CD8-positive, alpha-beta T cell (primary cell): ENCODE measurements at regions of chr6 and their contacts with region 1.

Region 1: GRCh38 chr6:27893059-27893835 is 18.9 kb downstream of the OR2B2 start:
- DNase-seq: peak; percentile 79 to 96 (median 85)
- ATAC-seq: peak; percentile 72
- H3K4me3 ChIP-seq: peak overlapping the region; percentile 66 to 81
- H3K4me3 Mint-ChIP-seq: no peak overlapping the region
- H3K27ac ChIP-seq: peak overlapping the region; percentile 70 to 88
- H3K27ac Mint-ChIP-seq: no peak overlapping the region
- H3K4me1 ChIP-seq: peaks cover 18% of the 10 kb centered on the region
- H3K4me1 Mint-ChIP-seq: peaks cover 29% of the 10 kb centered on the region
- H3K27me3 ChIP-seq: no peaks in the 10 kb centered on the region
- H3K27me3 Mint-ChIP-seq: no peaks in the 10 kb centered on the region
- CTCF ChIP-seq: no peak

Region 2: GRCh38 chr6:26025894-26026832 is 1867.1 kb before region 1 on chr6:
- CTCF ChIA-PET with region 1: no interaction called
- POLR2A ChIA-PET with region 1: interaction called, 16 read pairs
- intact Hi-C with region 1: loop called (anchors 5 kb)
- DNase-seq: peak; percentile 74 to 99 (median 89)
- ATAC-seq: peak; percentile 43
- H3K4me3 ChIP-seq: peak overlapping the region; percentile 50 to 76
- H3K4me3 Mint-ChIP-seq: peak overlapping the region; percentile 86
- H3K27ac ChIP-seq: peak overlapping the region; percentile 93 to 96
- H3K27ac Mint-ChIP-seq: peak overlapping the region; percentile 98
- H3K4me1 ChIP-seq: peaks cover 25% of the 10 kb centered on the region
- H3K4me1 Mint-ChIP-seq: peaks cover 48% of the 10 kb centered on the region
- H3K27me3 ChIP-seq: no peaks in the 10 kb centered on the region
- H3K27me3 Mint-ChIP-seq: no peaks in the 10 kb centered on the region
- CTCF ChIP-seq: peak; percentile 80

Region 3: GRCh38 chr6:26071135-26071534 is 1822.1 kb before region 1 on chr6:
- CTCF ChIA-PET with region 1: no interaction called
- POLR2A ChIA-PET with region 1: no interaction called
- intact Hi-C with region 1: no loop called
- DNase-seq: no peak
- ATAC-seq: no peak
- H3K4me3 ChIP-seq: no peak overlapping the region
- H3K4me3 Mint-ChIP-seq: no peak overlapping the region
- H3K27ac ChIP-seq: no peak overlapping the region
- H3K27ac Mint-ChIP-seq: no peak overlapping the region
- H3K4me1 ChIP-seq: peaks cover under 1% of the 10 kb centered on the region
- H3K4me1 Mint-ChIP-seq: no peaks in the 10 kb centered on the region
- H3K27me3 ChIP-seq: no peaks in the 10 kb centered on the region
- H3K27me3 Mint-ChIP-seq: peaks cover 2% of the 10 kb centered on the region
- CTCF ChIP-seq: no peak

Region 4: GRCh38 chr6:26234421-26235296 is 1658.6 kb before region 1 on chr6:
- CTCF ChIA-PET with region 1: no interaction called
- POLR2A ChIA-PET with region 1: interaction called, 19 read pairs
- intact Hi-C with region 1: no loop called
- DNase-seq: peak; percentile 55 to 88 (median 66)
- ATAC-seq: peak; percentile 63
- H3K4me3 ChIP-seq: peak overlapping the region; percentile 66 to 76
- H3K4me3 Mint-ChIP-seq: peak overlapping the region; percentile 85
- H3K27ac ChIP-seq: peak overlapping the region; percentile 84 to 92
- H3K27ac Mint-ChIP-seq: peak overlapping the region; percentile 93
- H3K4me1 ChIP-seq: peaks cover 14% of the 10 kb centered on the region
- H3K4me1 Mint-ChIP-seq: peaks cover 31% of the 10 kb centered on the region
- H3K27me3 ChIP-seq: no peaks in the 10 kb centered on the region
- H3K27me3 Mint-ChIP-seq: no peaks in the 10 kb centered on the region
- CTCF ChIP-seq: no peak

Region 5: GRCh38 chr6:27132532-27133280 is 760.5 kb before region 1 on chr6:
- CTCF ChIA-PET with region 1: interaction called, 3 read pairs
- POLR2A ChIA-PET with region 1: interaction called, 65 read pairs
- intact Hi-C with region 1: loop called (anchors 1 kb)
- DNase-seq: peak; percentile 80 to 99 (median 87)
- ATAC-seq: peak; percentile 82
- H3K4me3 ChIP-seq: peak overlapping the region; percentile 76 to 83
- H3K4me3 Mint-ChIP-seq: no peak overlapping the region
- H3K27ac ChIP-seq: peak overlapping the region; percentile 86 to 92
- H3K27ac Mint-ChIP-seq: no peak overlapping the region
- H3K4me1 ChIP-seq: peaks cover 15% of the 10 kb centered on the region
- H3K4me1 Mint-ChIP-seq: peaks cover 21% of the 10 kb centered on the region
- H3K27me3 ChIP-seq: no peaks in the 10 kb centered on the region
- H3K27me3 Mint-ChIP-seq: no peaks in the 10 kb centered on the region
- CTCF ChIP-seq: no peak

Region 6: DNA sequence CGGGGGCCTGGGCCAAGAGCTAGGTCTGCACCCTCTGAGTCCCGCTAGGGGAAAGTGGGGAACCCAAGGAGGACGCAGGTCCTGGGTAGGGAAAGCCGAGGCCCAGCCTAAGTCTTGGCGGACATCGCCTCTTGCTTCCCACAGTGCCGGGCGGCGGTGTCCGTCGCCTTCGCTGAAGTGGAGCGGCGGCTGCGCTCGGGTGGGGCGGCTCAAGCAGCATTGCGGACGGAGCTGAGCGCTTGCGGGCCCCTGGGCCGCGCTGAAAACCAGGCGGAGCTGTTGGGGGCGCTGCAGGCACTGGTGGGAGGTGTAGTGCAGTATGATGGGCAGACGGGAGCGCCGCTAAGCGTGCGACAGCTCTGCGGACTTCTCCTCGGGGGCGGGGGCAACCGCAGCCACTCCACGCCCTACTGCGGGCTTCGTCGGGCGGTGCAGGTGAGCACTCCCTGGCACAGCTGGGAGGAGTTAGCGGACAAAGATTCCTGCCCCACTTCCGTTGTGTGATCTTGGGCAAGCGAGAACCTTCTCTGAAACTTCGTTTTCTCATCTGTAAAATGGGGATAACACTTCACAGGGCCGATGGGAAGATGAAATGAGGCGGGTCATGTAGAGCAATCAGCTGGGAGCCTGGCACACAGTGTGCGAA is 641.5 kb before region 1 on chr6:
- CTCF ChIA-PET with region 1: no interaction called
- POLR2A ChIA-PET with region 1: interaction called, 4 read pairs
- intact Hi-C with region 1: loop called in 1 of 2 experiments (anchors 5 kb)
- DNase-seq: peak; percentile 18 to 87 (median 63)
- ATAC-seq: peak; percentile 91
- H3K4me3 ChIP-seq: peak overlapping the region; percentile 24 to 71
- H3K4me3 Mint-ChIP-seq: peak overlapping the region; percentile 86
- H3K27ac ChIP-seq: no peak overlapping the region
- H3K27ac Mint-ChIP-seq: no peak overlapping the region
- H3K4me1 ChIP-seq: peaks cover 12% of the 10 kb centered on the region
- H3K4me1 Mint-ChIP-seq: peaks cover 15% of the 10 kb centered on the region
- H3K27me3 ChIP-seq: peaks cover 17 to 19% of the 10 kb centered on the region in 2 experiments
- H3K27me3 Mint-ChIP-seq: peaks cover 55% of the 10 kb centered on the region
- CTCF ChIP-seq: peak; percentile 21

Region 7: GRCh38 chr6:27608916-27609883 is 284.0 kb before region 1 on chr6:
- CTCF ChIA-PET with region 1: no interaction called
- POLR2A ChIA-PET with region 1: no interaction called
- intact Hi-C with region 1: no loop called
- DNase-seq: peak in 2 of 9 experiments; percentile 44 to 58
- ATAC-seq: no peak
- H3K4me3 ChIP-seq: no peak overlapping the region
- H3K4me3 Mint-ChIP-seq: no peak overlapping the region
- H3K27ac ChIP-seq: no peak overlapping the region
- H3K27ac Mint-ChIP-seq: no peak overlapping the region
- H3K4me1 ChIP-seq: no peaks in the 10 kb centered on the region
- H3K4me1 Mint-ChIP-seq: peaks cover 11% of the 10 kb centered on the region
- H3K27me3 ChIP-seq: peaks cover 12 to 18% of the 10 kb centered on the region in 2 experiments
- H3K27me3 Mint-ChIP-seq: peaks cover 47% of the 10 kb centered on the region
- CTCF ChIP-seq: peak; percentile 48

Region 8: DNA sequence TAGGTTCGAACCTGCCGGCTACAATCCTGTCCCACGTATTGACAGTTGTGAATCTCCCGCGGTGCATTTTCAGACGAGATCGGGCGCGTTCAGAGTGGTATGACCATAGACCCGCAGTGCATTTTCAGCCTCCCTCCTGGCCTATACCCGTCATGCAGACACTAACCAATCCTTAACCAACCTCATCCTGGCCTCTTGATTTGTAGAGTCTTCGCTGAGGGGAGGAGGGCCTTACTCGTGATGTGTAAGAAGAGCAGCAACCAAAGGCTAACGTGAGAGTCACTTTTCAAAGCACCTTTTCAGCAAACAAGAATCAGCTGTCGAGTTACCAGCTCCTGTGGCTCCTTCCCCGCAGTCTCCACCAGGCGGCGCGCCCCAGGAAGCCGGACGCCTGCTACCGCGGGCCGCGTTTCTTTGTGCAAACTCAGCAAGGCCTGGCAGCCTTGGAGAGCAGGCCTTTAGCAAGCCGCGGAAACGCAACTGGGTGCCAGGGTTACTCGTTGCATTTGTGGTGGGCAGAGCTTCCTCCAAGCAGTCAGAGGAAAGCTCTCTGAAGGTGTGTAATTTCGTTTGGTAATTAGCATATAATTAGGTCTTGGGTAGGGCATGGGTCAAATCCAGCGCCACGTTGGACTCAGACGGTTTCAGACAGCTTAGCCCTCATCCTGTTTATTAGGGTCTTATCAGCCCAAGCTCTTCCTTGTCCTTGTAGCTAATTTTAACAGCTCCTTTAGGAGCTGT is 120.8 kb before region 1 on chr6:
- CTCF ChIA-PET with region 1: interaction called, 176 read pairs
- POLR2A ChIA-PET with region 1: interaction called, 55 read pairs
- intact Hi-C with region 1: loop called (anchors 1 kb)
- DNase-seq: peak; percentile 76 to 92 (median 84)
- ATAC-seq: peak; percentile 96
- H3K4me3 ChIP-seq: no peak overlapping the region
- H3K4me3 Mint-ChIP-seq: no peak overlapping the region
- H3K27ac ChIP-seq: peak overlapping the region in 1 of 2 experiments; percentile 8
- H3K27ac Mint-ChIP-seq: peak overlapping the region; percentile 56
- H3K4me1 ChIP-seq: peaks cover 11% of the 10 kb centered on the region
- H3K4me1 Mint-ChIP-seq: peaks cover 11% of the 10 kb centered on the region
- H3K27me3 ChIP-seq: no peaks in the 10 kb centered on the region
- H3K27me3 Mint-ChIP-seq: peaks cover 11% of the 10 kb centered on the region
- CTCF ChIP-seq: peak; percentile 85

Region 9: DNA sequence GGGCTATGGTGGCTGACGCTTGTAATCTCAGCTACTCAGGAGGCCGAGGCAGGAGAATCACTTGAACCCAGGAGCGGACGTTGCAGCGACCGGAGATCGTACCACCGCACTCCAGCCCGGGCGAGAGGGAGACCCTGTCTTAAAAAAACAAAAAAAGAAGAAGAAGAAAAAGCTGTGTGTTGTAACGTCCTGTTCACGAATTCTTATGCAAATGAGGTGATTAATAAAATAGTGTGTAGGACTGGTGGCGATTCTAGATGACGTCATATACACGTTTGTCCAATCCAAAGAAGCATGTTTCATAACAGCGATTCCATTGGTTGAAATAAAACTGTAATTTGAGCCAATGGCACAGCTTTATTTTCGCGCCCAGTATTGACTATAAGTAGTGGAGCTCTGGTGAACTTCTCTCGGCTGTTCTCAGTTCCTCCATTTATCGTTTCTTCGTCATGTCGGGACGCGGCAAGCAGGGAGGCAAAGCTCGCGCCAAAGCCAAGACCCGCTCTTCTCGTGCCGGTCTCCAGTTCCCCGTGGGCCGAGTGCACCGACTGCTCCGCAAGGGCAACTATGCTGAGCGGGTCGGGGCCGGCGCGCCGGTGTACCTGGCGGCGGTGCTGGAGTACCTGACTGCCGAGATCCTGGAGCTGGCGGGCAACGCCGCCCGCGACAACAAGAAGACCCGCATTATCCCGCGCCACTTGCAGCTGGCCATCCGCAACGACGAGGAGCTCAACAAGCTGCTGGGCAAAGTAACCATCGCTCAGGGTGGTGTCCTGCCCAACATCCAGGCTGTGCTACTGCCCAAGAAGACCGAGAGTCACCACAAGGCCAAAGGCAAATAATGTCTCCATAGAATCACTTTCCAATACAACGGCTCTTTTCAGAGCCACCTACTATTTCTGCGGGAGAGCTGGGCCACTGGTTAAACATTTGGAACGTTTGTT is 28.1 kb before region 1 on chr6:
- CTCF ChIA-PET with region 1: interaction called, 159 read pairs
- POLR2A ChIA-PET with region 1: interaction called, 448 read pairs
- intact Hi-C with region 1: loop called in 1 of 2 experiments (anchors 1 kb)
- DNase-seq: peak; percentile 37 to 97 (median 56)
- ATAC-seq: peak; percentile 83
- H3K4me3 ChIP-seq: peak overlapping the region; percentile 71 to 79
- H3K4me3 Mint-ChIP-seq: peak overlapping the region; percentile 95
- H3K27ac ChIP-seq: peak overlapping the region; percentile 67 to 83
- H3K27ac Mint-ChIP-seq: peak overlapping the region; percentile 94
- H3K4me1 ChIP-seq: peaks cover 17% of the 10 kb centered on the region
- H3K4me1 Mint-ChIP-seq: peaks cover 38% of the 10 kb centered on the region
- H3K27me3 ChIP-seq: no peaks in the 10 kb centered on the region
- H3K27me3 Mint-ChIP-seq: no peaks in the 10 kb centered on the region
- CTCF ChIP-seq: no peak

Region 10: DNA sequence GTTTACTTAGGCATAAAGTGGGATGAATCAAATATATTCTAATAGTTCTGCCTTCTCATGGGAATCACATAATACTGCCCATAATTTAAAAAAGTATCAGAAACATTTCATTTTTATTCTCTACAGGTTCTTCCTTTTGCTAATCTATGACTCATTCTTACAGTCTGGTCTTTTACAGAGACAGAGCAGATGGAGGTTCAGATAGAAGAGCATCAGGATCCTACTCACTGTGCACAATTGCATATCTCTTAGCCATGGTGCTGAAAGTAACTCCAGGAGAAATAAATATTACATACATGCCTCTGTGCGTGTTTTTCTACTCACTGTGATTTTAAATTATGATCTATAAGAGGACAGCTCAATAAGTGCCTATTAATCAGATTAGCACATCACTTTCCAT is 47.5 kb after region 1 on chr6:
- CTCF ChIA-PET with region 1: no interaction called
- POLR2A ChIA-PET with region 1: no interaction called
- intact Hi-C with region 1: no loop called
- DNase-seq: no peak
- ATAC-seq: no peak
- H3K4me3 ChIP-seq: no peak overlapping the region
- H3K4me3 Mint-ChIP-seq: no peak overlapping the region
- H3K27ac ChIP-seq: no peak overlapping the region
- H3K27ac Mint-ChIP-seq: no peak overlapping the region
- H3K4me1 ChIP-seq: no peaks in the 10 kb centered on the region
- H3K4me1 Mint-ChIP-seq: no peaks in the 10 kb centered on the region
- H3K27me3 ChIP-seq: peaks cover 0 to 5% of the 10 kb centered on the region in 2 experiments
- H3K27me3 Mint-ChIP-seq: peaks cover 43% of the 10 kb centered on the region
- CTCF ChIP-seq: no peak